HCT116 (cell line): ENCODE measurements at regions of chr5 and their contacts with region 1.

Region 1: GRCh38 chr5:62143268-62144229 is 162.5 kb upstream of the KIF2A start:
- DNase-seq: peak; percentile 16
- ATAC-seq: peak; percentile 82
- H3K4me3 ChIP-seq: no peak overlapping the region
- H3K27ac ChIP-seq: no peak overlapping the region
- H3K4me1 ChIP-seq: no peaks in the 10 kb centered on the region
- H3K27me3 ChIP-seq: peaks cover 53% of the 10 kb centered on the region
- CTCF ChIP-seq: peak; percentile 20 to 69 (median 48); a peak in 5 of 6 replicates
- POLR2A ChIP-seq: no peak
- RAD21 ChIP-seq: peak; percentile 49

Region 2: GRCh38 chr5:62354028-62354874 is 210.7 kb after region 1 on chr5:
- CTCF ChIA-PET with region 1: no interaction called
- POLR2A ChIA-PET with region 1: no interaction called
- RAD21 ChIA-PET with region 1: no interaction called
- intact Hi-C with region 1: loop called (anchors 5 kb)
- DNase-seq: peak; percentile 31
- ATAC-seq: peak; percentile 80
- H3K4me3 ChIP-seq: no peak overlapping the region
- H3K27ac ChIP-seq: no peak overlapping the region
- H3K4me1 ChIP-seq: no peaks in the 10 kb centered on the region
- H3K27me3 ChIP-seq: no peaks in the 10 kb centered on the region
- CTCF ChIP-seq: peak; percentile 50 to 75 (median 61); a peak in 5 of 6 replicates
- POLR2A ChIP-seq: no peak
- RAD21 ChIP-seq: peak; percentile 69

Region 3: GRCh38 chr5:62385131-62385530 is 241.6 kb after region 1 on chr5:
- CTCF ChIA-PET with region 1: no interaction called
- POLR2A ChIA-PET with region 1: no interaction called
- RAD21 ChIA-PET with region 1: no interaction called
- intact Hi-C with region 1: no loop called
- DNase-seq: no peak
- ATAC-seq: no peak
- H3K4me3 ChIP-seq: no peak overlapping the region
- H3K27ac ChIP-seq: no peak overlapping the region
- H3K4me1 ChIP-seq: no peaks in the 10 kb centered on the region
- H3K27me3 ChIP-seq: no peaks in the 10 kb centered on the region
- CTCF ChIP-seq: no peak
- POLR2A ChIP-seq: no peak
- RAD21 ChIP-seq: no peak